Natural killer cell (primary cell): ENCODE measurements at regions of chr9 and their contacts with region 1.

Region 1: DNA sequence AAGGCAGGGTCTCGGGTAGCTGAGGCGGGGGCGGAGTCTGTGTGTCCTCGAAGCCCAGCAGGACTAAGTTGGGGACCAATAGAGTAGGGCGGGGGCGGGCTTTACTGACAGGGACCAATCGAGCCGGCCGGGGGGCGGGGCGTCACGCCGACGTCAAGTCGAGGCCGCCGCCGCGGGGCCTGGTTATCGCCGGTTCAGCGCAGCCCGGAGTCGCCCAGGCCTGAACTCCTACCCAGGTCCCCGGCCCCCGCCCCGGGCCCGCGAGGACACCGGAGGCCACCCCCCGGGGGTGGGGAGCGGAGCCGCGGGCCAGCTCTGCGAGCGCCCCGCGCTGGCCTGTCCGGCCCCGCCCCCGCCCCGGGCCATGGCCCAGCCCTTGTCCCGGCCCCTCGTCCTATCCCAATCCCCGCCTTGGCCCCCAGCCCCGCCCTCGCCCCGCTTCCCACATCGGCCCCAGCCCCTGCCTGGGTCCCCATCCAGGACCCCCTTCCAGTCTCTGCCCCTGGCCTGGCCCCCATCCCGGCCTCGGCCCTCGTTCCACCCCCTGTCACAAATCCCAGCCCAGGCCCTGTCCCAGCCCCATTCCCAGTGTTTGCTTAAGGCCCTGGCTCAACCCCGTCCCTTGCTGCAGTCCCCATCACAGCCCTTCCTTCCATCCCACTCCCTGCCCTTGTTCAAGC is at the start of gene TMEM8B:
- DNase-seq: peak; percentile 88 to 96
- ATAC-seq: peak; percentile 94 to 95 (median 94)
- H3K4me3 ChIP-seq: peak within 1 kb of the TSS; percentile 82
- H3K4me3 Mint-ChIP-seq: peak within 1 kb of the TSS; percentile 99
- H3K27ac ChIP-seq: peak within 1 kb of the TSS; percentile 70
- H3K27ac Mint-ChIP-seq: peak within 1 kb of the TSS; percentile 92 to 93
- H3K4me1 ChIP-seq: peaks cover 23% of the 10 kb centered on the region
- H3K4me1 Mint-ChIP-seq: peaks cover 27 to 38% of the 10 kb centered on the region in 2 donors
- H3K27me3 ChIP-seq: no peaks in the 10 kb centered on the region
- H3K27me3 Mint-ChIP-seq: no peaks in the 10 kb centered on the region
- CTCF ChIP-seq: no peak
- total RNA-seq, gene TMEM8B: 5.2 to 7.8 (median 5.4) TPM

Region 2: GRCh38 chr9:35790385-35791296 is 38.6 kb before region 1 on chr9:
- intact Hi-C with region 1: loop called (anchors 1 kb)
- DNase-seq: peak; percentile 39 to 84
- ATAC-seq: peak; percentile 80 to 97 (median 95)
- H3K4me3 ChIP-seq: no peak overlapping the region
- H3K4me3 Mint-ChIP-seq: peak overlapping the region; percentile 53
- H3K27ac ChIP-seq: no peak overlapping the region
- H3K27ac Mint-ChIP-seq: peak overlapping the region in 1 of 2 donors; percentile 33
- H3K4me1 ChIP-seq: no peaks in the 10 kb centered on the region
- H3K4me1 Mint-ChIP-seq: peaks cover 0 to 18% of the 10 kb centered on the region in 2 donors
- H3K27me3 ChIP-seq: no peaks in the 10 kb centered on the region
- H3K27me3 Mint-ChIP-seq: peaks cover 0 to 9% of the 10 kb centered on the region in 2 donors
- CTCF ChIP-seq: peak; percentile 85

Region 3: DNA sequence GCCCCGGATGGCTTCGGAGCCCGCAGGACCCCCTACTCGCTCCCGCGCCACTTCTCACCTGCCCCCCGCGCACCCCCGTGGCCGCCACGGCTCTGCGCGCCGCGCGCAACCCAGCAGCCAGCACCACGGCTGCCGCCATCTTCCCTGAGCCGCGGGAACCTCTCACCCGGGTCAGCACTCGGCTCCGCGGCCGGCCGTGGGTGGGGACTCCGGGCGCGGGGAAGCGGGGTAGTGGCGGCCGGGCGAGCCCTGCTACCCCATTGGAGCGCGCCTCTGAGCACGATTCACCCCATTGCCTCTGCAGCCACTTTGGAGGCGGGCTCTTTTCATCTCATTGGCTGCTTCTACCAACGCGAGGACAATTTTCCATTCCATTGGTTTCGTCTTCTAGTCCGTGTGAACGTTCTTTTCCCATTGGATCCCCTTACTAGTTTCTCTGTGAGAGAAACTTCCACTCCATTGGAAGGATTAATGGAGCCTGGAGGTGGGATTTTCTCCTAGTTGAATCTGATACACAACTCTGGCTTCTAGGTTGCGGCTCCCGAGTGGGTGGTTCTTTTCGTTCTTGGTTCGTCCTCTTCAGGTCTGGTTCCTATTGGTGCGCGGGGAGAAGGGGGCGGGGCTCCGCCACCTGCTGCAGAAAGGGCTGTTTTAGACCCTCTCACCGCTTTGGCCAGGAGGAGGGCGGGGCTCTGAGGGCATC is 14.2 kb before region 1 on chr9 and contains the start of gene HINT2:
- intact Hi-C with region 1: loop called (anchors 1 kb)
- DNase-seq: peak; percentile 96 to 98
- ATAC-seq: peak; percentile 78 to 91 (median 79)
- H3K4me3 ChIP-seq: peak within 1 kb of the TSS; percentile 73
- H3K4me3 Mint-ChIP-seq: peak within 1 kb of the TSS; percentile 98
- H3K27ac ChIP-seq: peak within 1 kb of the TSS; percentile 87
- H3K27ac Mint-ChIP-seq: peak within 1 kb of the TSS; percentile 96 to 98
- H3K4me1 ChIP-seq: peaks cover 38% of the 10 kb centered on the region
- H3K4me1 Mint-ChIP-seq: peaks cover 43 to 53% of the 10 kb centered on the region in 2 donors
- H3K27me3 ChIP-seq: no peaks in the 10 kb centered on the region
- H3K27me3 Mint-ChIP-seq: no peaks in the 10 kb centered on the region
- CTCF ChIP-seq: no peak
- total RNA-seq, gene HINT2: 25.8 to 27.5 (median 25.9) TPM